ENCODE measurements at regions of chr9 and their contacts with region 1.

Region 1: DNA sequence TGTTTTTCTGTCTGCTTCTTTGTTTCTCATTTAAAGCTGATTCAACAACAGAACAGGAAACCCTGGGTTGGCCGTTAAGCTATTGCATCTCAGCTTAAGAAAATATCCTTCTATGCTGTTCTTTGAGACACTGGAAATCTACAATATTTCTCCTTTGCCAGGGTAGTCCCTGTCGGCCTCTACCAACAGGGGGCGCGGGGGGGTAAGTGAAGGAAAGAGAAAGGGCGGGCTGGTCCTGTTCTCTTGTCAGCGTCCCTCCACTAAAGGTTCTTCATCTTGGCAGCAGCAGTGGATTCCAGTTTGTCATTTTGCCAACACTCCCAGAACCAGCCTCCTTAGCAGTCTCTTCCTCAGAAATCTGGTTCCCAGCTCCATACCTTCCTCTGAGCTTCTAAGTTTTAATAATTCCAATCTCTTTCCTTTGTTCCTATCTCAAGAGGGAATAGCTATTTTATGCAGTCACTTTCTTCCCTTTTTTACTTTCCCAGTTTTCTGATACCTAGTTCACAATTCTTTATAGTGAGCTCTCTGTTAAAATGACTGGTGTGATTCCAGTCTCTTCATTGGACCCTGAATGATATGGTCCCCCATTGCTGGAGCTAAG is 222.3 kb downstream of the GLIS3 start:
- DNase-seq: peak; percentile 10
- ATAC-seq: peak; percentile 86
- H3K4me3 ChIP-seq: no peak overlapping the region
- H3K27ac ChIP-seq: no peak overlapping the region
- H3K4me1 ChIP-seq: no peaks in the 10 kb centered on the region
- H3K27me3 ChIP-seq: 0 out of 5 replicates have a peak, but pooled peaks cover 0 to 1% of the 10 kb centered on the region in 2 experiments
- CTCF ChIP-seq: peak; percentile 68
- EP300 ChIP-seq: no peak
- POLR2A ChIP-seq: no peak
- RAD21 ChIP-seq: no peak

Region 2: GRCh38 chr9:3534614-3535404 is 542.8 kb before region 1 on chr9:
- CTCF ChIA-PET with region 1: no interaction called
- POLR2A ChIA-PET with region 1: no interaction called
- in situ Hi-C with region 1: no loop called
- intact Hi-C with region 1: no loop called
- DNase-seq: no peak
- ATAC-seq: no peak; the same call in 2 of the 3 replicates
- H3K4me3 ChIP-seq: no peak overlapping the region
- H3K27ac ChIP-seq: no peak overlapping the region
- H3K4me1 ChIP-seq: peaks cover 11% of the 10 kb centered on the region
- H3K27me3 ChIP-seq: no peaks in the 10 kb centered on the region
- CTCF ChIP-seq: no peak
- EP300 ChIP-seq: no peak
- POLR2A ChIP-seq: no peak
- RAD21 ChIP-seq: no peak

Region 3: DNA sequence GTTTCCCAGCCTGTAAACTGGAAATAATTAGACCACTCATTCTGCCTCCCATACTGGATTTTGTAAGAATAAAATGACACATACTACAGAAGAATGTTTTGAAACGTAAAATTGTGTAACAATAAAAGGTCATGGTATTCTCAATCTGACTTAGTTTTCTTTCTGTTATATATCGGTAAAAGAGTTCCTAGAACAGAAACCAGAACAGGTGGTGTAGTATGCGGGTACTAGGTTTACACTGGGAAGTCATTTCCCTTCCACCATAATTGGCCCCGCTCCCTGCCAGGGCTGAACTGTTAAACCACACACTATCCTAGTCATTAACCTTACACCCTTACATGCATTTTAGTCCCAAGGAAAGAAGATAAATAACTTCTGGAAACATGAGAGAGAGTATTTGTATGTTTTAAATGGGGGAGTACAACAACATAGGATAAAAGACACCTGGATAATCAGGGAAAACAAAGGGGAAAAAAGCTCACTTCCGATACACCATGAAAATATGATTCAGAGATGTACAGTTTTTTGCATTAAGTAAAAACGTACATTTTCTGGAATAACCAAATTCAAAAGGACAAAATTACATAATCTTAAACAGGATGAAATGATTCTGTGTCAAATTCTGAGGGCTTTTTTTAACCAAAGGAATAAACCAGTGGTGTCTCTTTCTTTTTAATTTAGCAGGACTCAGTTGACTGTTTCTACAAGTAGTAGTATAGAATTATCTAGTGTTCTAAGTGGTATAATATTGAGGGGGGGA is 22.6 kb after region 1 on chr9:
- CTCF ChIA-PET with region 1: no interaction called
- POLR2A ChIA-PET with region 1: no interaction called
- in situ Hi-C with region 1: no loop called
- intact Hi-C with region 1: no loop called
- DNase-seq: no peak
- ATAC-seq: no peak
- H3K4me3 ChIP-seq: no peak overlapping the region
- H3K27ac ChIP-seq: no peak overlapping the region
- H3K4me1 ChIP-seq: no peaks in the 10 kb centered on the region
- H3K27me3 ChIP-seq: no peaks in the 10 kb centered on the region
- CTCF ChIP-seq: no peak
- EP300 ChIP-seq: no peak
- POLR2A ChIP-seq: no peak
- RAD21 ChIP-seq: no peak

Region 4: DNA sequence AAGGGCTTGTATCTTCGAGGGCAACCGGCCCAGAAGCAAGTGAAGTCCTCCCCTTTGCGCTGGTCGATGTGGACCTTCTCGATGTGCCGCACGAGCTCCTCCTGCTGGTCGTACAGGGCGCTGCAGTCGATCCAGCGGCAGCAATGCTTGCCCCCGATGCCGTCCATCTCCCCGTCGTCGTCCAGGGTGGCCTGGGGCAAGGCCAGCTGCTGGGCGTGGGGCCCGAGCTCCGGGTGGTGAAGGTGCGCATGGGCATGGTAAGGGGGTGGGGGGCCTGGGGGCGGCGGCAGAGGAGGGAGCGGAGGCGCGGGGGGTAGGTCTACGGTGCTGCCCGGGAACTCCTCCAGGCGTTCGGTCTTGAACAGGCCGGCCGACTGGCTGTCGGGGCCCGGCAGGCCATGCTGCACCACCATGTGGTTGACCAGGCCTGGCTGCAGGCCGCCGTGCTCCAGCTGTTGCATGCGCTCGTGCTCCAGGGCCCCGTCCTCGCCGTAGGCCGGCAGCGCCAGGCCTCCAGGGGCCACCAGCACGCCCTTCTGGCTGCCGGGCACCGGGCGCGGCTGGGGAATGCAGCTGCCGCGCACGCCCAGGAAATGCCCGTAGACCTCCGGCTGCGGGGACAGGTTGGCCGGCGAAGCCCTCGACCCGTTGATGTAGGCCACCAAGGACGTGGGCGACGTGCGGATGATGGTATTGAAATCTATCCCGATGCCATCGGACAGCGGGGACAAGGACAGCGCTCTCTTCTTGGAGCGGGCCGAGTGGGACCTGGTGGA is 40.4 kb after region 1 on chr9:
- CTCF ChIA-PET with region 1: no interaction called
- POLR2A ChIA-PET with region 1: no interaction called
- in situ Hi-C with region 1: no loop called
- intact Hi-C with region 1: loop called (anchors 5 kb)
- DNase-seq: peak; percentile 9
- ATAC-seq: peak; percentile 85
- H3K4me3 ChIP-seq: no peak overlapping the region
- H3K27ac ChIP-seq: no peak overlapping the region
- H3K4me1 ChIP-seq: no peaks in the 10 kb centered on the region
- H3K27me3 ChIP-seq: no peaks in the 10 kb centered on the region
- CTCF ChIP-seq: peak; percentile 89
- EP300 ChIP-seq: no peak
- POLR2A ChIP-seq: no peak
- RAD21 ChIP-seq: peak; percentile 76

Region 5: GRCh38 chr9:4228606-4229005 is 151.0 kb after region 1 on chr9:
- CTCF ChIA-PET with region 1: no interaction called
- POLR2A ChIA-PET with region 1: no interaction called
- in situ Hi-C with region 1: no loop called
- intact Hi-C with region 1: loop called (anchors 5 kb)
- DNase-seq: no peak
- ATAC-seq: peak; percentile 63; the same call in 2 of the 3 replicates
- H3K4me3 ChIP-seq: no peak overlapping the region
- H3K27ac ChIP-seq: no peak overlapping the region
- H3K4me1 ChIP-seq: no peaks in the 10 kb centered on the region
- H3K27me3 ChIP-seq: no peaks in the 10 kb centered on the region; a peak in 1 of 5 replicates
- CTCF ChIP-seq: peak; percentile 39; the same call in 1 of the 2 replicates
- EP300 ChIP-seq: no peak
- POLR2A ChIP-seq: no peak
- RAD21 ChIP-seq: no peak

Region 6: DNA sequence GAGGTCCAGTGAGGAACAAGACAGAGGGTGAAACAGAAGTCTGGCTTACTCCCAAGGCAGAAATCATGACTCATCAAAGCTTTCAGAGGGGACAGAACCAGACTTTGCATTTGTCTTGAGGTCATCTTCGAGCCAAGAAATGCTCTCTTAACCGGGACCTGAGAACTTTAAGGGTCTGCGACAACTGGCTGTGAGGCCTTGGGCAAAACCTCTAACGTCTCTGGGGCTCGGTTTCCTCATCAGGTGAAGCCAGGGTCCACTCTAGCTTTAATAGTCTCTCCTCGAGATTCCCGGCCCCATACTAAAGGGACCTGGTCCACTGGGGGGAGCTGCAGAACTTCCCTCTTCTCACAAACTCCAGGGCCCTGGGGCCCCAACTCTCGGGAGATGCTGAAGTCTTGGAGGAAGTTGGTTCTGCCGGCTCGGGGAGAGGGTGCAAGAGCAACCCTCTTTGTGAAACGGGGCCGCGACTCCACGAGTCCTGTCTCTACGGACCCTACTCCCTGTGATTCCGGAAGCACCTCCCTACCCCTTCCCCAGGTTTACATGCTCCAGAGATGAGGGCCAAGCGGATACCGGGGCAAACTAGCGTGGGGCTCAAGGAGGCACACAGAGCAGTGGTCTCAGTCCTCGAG is 219.7 kb after region 1 on chr9:
- CTCF ChIA-PET with region 1: no interaction called
- POLR2A ChIA-PET with region 1: no interaction called
- in situ Hi-C with region 1: no loop called
- intact Hi-C with region 1: loop called (anchors 1 kb)
- DNase-seq: peak; percentile 57
- ATAC-seq: peak; percentile 78
- H3K4me3 ChIP-seq: peak overlapping the region; percentile 67 to 79 (median 69)
- H3K27ac ChIP-seq: no peak overlapping the region
- H3K4me1 ChIP-seq: peaks cover 21% of the 10 kb centered on the region
- H3K27me3 ChIP-seq: peaks cover 10 to 24% of the 10 kb centered on the region in 2 experiments; a peak in 4 of 5 replicates
- CTCF ChIP-seq: peak; percentile 60
- EP300 ChIP-seq: no peak
- POLR2A ChIP-seq: no peak
- RAD21 ChIP-seq: peak; percentile 37; the same call in 1 of the 2 replicates

Region 7: DNA sequence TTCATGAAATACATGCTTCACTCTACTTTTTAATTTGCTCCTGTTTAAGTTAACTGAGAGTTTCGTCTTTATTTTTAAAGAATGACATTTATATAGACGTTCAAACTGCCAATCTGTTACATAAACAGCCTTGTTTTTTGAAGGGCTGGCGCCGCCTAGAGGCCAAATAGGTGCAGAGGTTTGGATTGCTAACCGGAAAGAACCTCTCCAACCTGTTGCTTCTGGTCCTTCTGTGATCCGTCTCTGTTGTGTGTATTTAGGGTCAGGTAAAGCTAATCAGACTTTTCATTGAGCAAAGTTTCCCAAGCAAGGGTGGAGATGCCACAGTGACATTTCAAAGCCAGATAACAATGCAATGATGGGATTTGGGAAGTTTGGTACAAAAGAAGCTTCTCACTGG is 261.8 kb after region 1 on chr9:
- CTCF ChIA-PET with region 1: interaction called, 6 read pairs
- POLR2A ChIA-PET with region 1: no interaction called
- in situ Hi-C with region 1: no loop called
- intact Hi-C with region 1: loop called (anchors 1 kb)
- DNase-seq: peak; percentile 66
- ATAC-seq: peak; percentile 78
- H3K4me3 ChIP-seq: no peak overlapping the region
- H3K27ac ChIP-seq: no peak overlapping the region
- H3K4me1 ChIP-seq: 0 out of 2 replicates have a peak, but pooled peaks cover 5% of the 10 kb centered on the region
- H3K27me3 ChIP-seq: no peaks in the 10 kb centered on the region
- CTCF ChIP-seq: peak; percentile 79
- EP300 ChIP-seq: no peak
- POLR2A ChIP-seq: no peak
- RAD21 ChIP-seq: no peak

Region 8: GRCh38 chr9:4366591-4367330 is 289.2 kb after region 1 on chr9:
- CTCF ChIA-PET with region 1: no interaction called
- POLR2A ChIA-PET with region 1: no interaction called
- in situ Hi-C with region 1: no loop called
- intact Hi-C with region 1: loop called (anchors 5 kb)
- DNase-seq: peak; percentile 10
- ATAC-seq: peak; percentile 52; the same call in 2 of the 3 replicates
- H3K4me3 ChIP-seq: no peak overlapping the region
- H3K27ac ChIP-seq: no peak overlapping the region
- H3K4me1 ChIP-seq: no peaks in the 10 kb centered on the region
- H3K27me3 ChIP-seq: no peaks in the 10 kb centered on the region
- CTCF ChIP-seq: peak; percentile 71
- EP300 ChIP-seq: 0 out of 4 replicates have a peak, but pooled peaks of 1 of the 2 experiments have one; percentile 14
- POLR2A ChIP-seq: no peak
- RAD21 ChIP-seq: peak; percentile 51; the same call in 1 of the 2 replicates